Endothelial cell of umbilical vein (primary cell): ENCODE measurements at regions of chr17 and their contacts with region 1.

Region 1: DNA sequence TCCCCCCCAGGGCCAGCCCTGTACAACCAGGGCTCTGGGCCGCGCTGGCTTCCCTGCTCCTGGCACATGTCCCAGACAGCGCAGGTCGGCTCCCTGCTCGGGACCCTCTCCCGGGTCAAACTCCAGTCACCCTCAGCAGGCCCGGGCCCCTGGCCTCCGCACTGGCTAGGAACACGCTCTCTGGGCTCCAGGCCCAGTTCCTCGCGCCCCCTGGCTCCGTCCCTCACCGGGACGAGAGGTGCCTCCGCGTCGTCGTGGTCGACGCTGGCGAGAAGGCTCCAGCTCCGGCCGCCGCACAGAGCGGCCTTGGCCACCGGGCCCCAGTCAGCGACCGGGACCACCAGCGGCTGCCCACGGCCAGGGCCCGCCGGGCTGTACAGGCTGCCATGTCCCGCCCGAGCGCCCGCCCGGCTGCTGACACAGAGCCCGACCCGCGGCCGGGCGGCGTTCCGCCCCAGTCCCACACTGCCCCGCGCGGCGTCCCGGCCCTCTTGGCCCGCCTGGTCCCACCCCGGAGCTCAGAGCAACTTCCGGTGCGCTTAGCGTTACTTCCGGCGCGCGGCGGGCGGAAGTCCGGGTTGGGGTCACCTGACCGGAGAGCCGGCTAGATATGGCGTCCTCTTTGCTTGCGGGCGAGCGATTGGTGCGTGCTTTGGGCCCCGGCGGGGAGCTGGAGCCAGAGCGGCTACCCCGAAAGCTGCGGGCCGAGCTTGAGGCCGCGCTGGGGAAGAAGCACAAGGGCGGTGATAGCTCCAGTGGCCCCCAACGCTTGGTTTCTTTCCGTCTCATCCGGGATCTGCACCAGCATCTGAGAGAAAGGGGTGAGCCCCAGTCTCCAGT is at the start of gene POLDIP2:
- DNase-seq: peak; percentile 95
- H3K4me3 ChIP-seq: peak within 1 kb of the TSS; percentile 89 to 98 (median 91)
- H3K27ac ChIP-seq: peak within 1 kb of the TSS; percentile 92
- H3K4me1 ChIP-seq: peaks cover 17% of the 10 kb centered on the region
- H3K27me3 ChIP-seq: no peaks in the 10 kb centered on the region
- CTCF ChIP-seq: no peak
- POLR2A ChIP-seq: peak; percentile 96
- total RNA-seq, gene POLDIP2: 81.0 and 85.2 TPM in 2 replicates

Region 2: DNA sequence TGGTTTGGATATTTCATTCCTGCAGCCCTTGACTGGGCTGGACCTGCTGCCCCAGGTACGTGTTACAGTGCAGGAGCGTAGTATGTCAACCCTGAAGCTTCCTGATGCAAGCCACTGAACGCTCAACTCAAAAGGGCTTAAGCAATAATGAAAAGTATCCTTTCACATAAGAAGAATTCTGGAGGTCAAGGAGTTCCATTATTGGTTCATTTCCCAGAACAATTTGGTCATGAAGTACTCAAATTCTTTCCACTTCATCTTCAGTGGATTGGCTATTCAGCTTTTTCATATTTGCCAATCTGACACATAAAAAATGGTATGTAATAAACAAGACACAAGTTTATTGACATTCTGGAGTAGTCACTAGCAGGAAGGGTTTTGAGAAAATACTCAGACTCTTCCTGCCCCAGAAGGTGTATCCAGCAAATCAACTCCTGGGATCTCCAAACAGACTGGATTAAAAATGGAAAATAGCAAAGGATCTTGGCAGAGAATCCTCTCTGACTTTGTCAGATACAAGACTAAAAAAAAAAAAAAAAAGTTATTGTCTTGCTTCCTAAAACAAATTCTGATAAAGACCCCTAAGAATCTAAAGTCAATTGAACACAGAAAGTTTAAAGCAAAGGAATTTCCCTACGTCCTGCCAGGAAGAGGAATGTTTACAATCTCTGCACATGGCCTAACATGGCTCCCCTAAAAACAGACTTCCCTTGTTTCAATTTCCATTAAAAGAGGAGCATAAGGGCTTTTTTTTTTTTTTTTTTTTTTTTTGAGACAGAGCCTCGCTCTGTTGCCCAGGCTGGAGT is 1100.9 kb before region 1 on chr17:
- CTCF ChIA-PET with region 1: no interaction called
- POLR2A ChIA-PET with region 1: no interaction called
- dilution Hi-C with region 1: no loop called
- intact Hi-C with region 1: loop called (anchors 10 kb)
- DNase-seq: peak; percentile 93
- H3K4me3 ChIP-seq: no peak overlapping the region
- H3K27ac ChIP-seq: peak overlapping the region; percentile 63
- H3K4me1 ChIP-seq: peaks cover 16% of the 10 kb centered on the region
- H3K27me3 ChIP-seq: no peaks in the 10 kb centered on the region
- CTCF ChIP-seq: no peak
- POLR2A ChIP-seq: no peak

Region 3: DNA sequence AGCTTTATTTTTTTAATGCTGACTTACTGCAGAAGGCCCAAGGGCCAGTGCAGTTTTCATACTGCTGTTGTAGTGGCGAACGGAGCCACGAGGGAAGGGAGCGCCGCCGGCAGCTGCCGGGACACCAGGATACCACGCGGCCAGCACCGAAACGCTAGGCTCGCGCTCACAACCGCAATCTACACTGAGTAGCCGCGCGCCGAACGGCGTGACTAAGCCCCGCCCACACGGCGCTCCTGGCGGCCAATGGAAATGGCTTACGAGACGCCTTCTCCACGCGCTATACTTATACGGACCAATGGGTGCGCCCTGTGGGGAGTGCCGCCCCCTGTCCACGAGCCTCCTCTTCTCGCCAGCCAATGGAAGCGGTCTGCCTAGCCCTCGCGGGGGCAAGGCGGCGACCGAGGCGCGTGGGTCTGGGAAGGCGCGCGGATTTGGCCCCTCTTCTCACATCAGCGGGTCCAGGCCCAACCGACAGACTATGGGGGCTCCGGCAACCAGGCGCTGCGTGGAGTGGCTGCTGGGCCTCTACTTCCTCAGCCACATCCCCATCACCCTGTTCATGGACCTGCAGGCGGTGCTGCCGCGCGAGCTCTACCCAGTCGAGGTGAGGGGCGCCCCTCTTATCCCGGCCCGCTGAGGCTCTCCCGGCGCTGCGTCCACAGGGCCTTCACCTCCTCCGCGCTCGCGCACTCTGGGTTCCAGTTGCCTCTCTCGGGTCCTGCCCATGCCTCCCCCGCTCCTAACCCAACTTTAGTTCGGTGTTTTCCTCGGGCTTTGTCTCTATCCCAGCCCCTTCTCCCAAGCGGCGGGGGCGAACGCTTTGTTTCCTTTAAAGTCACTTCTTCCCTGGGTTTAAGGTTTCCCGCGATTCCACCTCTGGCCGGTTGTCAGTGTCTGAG is 38.3 kb before region 1 on chr17 and contains the start of gene TMEM97:
- CTCF ChIA-PET with region 1: interaction called, 3 read pairs
- POLR2A ChIA-PET with region 1: no interaction called
- dilution Hi-C with region 1: no loop called
- intact Hi-C with region 1: loop called (anchors 1 kb)
- DNase-seq: peak; percentile 98
- H3K4me3 ChIP-seq: peak within 1 kb of the TSS; percentile 52 to 80 (median 65)
- H3K27ac ChIP-seq: peak within 1 kb of the TSS; percentile 9
- H3K4me1 ChIP-seq: peaks cover 18% of the 10 kb centered on the region
- H3K27me3 ChIP-seq: peaks cover 0 to under 1% of the 10 kb centered on the region in 2 experiments
- CTCF ChIP-seq: no peak
- POLR2A ChIP-seq: peak; percentile 47
- total RNA-seq, gene TMEM97: 43.5 and 51.7 TPM in 2 replicates

Region 4: DNA sequence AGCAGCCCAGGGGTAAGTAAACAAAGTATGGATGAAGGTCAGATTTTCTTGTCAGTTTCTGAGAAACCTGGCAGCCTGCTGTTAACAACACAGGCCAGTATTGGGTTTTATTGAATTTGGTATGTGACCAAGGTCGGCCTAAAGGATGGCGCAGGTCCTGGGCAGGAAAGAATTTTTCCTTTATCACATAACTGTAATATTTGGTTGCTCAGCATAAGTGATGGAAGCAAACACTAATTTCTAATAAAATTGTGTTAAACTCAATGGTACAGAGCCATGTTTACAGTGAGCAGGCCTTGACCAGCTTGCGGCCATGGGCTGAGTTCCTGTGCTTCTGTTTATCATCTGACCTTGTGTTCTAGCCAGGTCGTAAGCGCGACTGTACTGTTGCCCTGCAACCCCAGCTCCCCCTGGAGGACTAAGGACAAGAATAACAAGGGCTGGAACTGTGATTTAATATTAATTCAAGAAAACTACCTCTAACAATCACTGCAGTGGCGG is 10.5 kb before region 1 on chr17:
- CTCF ChIA-PET with region 1: interaction called, 23 read pairs
- POLR2A ChIA-PET with region 1: interaction called, 13 read pairs
- dilution Hi-C with region 1: no loop called
- intact Hi-C with region 1: loop called (anchors 1 kb)
- DNase-seq: peak; percentile 90
- H3K4me3 ChIP-seq: no peak overlapping the region
- H3K27ac ChIP-seq: peak overlapping the region; percentile 88
- H3K4me1 ChIP-seq: peaks cover 32% of the 10 kb centered on the region
- H3K27me3 ChIP-seq: no peaks in the 10 kb centered on the region
- CTCF ChIP-seq: peak; percentile 59 to 61
- POLR2A ChIP-seq: no peak

Region 5: DNA sequence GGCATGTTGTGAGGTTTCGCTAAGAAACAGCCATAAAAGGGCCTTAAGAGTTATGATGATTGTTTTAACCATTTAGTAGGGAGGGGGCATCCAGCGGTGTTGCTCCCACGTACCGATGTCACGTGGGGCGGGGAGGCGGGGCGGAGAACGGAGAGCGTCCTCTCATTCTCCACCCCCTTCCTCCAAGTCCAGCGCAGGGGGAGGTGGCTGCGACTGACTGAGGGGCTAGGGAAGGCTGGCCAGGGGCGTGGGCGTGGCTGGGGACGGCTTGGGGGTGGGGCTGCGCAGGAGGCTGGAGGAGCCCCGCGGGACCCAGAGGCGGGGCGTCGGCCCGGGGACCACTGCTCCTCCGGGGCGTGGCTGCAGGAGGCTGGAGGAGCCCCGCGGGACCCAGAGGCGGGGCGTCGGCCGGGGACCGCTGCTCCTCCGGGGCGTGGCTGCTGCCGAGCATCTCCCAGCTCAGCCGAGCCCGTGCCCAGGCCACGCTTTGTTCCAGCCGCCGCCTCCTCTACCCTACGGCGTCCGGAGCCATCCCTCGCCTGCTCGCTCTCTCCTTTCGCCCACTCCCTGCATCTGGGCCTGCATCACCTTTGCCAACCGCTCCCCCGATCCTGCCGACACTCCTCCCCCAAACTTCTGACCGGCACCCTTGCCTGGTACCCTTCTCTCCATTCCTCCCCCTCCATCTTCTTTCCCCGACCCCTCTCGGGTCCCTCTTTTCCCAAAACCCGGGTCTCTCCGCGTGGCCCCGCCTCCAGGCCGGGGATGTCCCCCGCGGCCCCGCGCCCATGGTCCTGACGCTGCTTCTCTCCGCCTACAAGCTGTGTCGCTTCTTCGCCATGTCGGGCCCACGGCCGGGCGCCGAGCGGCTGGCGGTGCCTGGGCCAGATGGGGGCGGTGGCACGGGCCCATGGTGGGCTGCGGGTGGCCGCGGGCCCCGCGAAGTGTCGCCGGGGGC is 14.2 kb after region 1 on chr17 and contains the start of gene SARM1:
- CTCF ChIA-PET with region 1: interaction called, 5 read pairs
- POLR2A ChIA-PET with region 1: interaction called, 4 read pairs
- dilution Hi-C with region 1: no loop called
- intact Hi-C with region 1: loop called (anchors 1 kb)
- DNase-seq: peak; percentile 88
- H3K4me3 ChIP-seq: peak within 1 kb of the TSS; percentile 35 to 52 (median 45)
- H3K27ac ChIP-seq: no peak within 1 kb of the TSS
- H3K4me1 ChIP-seq: peaks cover 13% of the 10 kb centered on the region
- H3K27me3 ChIP-seq: no peaks in the 10 kb centered on the region
- CTCF ChIP-seq: no peak
- POLR2A ChIP-seq: no peak
- total RNA-seq, gene SARM1: 4.6 and 7.0 TPM in 2 replicates